Ovary (tissue), 10 donors: ENCODE measurements at regions of chr21 and their contacts with region 1.

Region 1: GRCh38 chr21:14594967-14595366 is 48.9 kb upstream of the SAMSN1 start:
- DNase-seq: no peak
- H3K4me3 ChIP-seq: no peak overlapping the region
- H3K27ac ChIP-seq: no peak overlapping the region
- H3K4me1 ChIP-seq: no peaks in the 10 kb centered on the region
- H3K27me3 ChIP-seq: no peaks in the 10 kb centered on the region
- CTCF ChIP-seq: no peak
- EP300 ChIP-seq: no peak
- POLR2A ChIP-seq: no peak

Region 2: GRCh38 chr21:14290576-14290975 is 304.4 kb before region 1 on chr21:
- intact Hi-C with region 1: no loop called
- DNase-seq: no peak
- H3K4me3 ChIP-seq: no peak overlapping the region
- H3K27ac ChIP-seq: no peak overlapping the region
- H3K4me1 ChIP-seq: no peaks in the 10 kb centered on the region
- H3K27me3 ChIP-seq: no peaks in the 10 kb centered on the region
- CTCF ChIP-seq: no peak
- EP300 ChIP-seq: no peak
- POLR2A ChIP-seq: no peak

Region 3: GRCh38 chr21:14581902-14582457 is 13.0 kb before region 1 on chr21:
- intact Hi-C with region 1: loop called in 1 of 4 experiments (anchors 2 kb)
- DNase-seq: no peak
- H3K4me3 ChIP-seq: no peak overlapping the region
- H3K27ac ChIP-seq: no peak overlapping the region
- H3K4me1 ChIP-seq: no peaks in the 10 kb centered on the region
- H3K27me3 ChIP-seq: no peaks in the 10 kb centered on the region
- CTCF ChIP-seq: no peak
- EP300 ChIP-seq: no peak
- POLR2A ChIP-seq: no peak